ENCODE measurements at regions of chr1 and their contacts with region 1.

Region 1: DNA sequence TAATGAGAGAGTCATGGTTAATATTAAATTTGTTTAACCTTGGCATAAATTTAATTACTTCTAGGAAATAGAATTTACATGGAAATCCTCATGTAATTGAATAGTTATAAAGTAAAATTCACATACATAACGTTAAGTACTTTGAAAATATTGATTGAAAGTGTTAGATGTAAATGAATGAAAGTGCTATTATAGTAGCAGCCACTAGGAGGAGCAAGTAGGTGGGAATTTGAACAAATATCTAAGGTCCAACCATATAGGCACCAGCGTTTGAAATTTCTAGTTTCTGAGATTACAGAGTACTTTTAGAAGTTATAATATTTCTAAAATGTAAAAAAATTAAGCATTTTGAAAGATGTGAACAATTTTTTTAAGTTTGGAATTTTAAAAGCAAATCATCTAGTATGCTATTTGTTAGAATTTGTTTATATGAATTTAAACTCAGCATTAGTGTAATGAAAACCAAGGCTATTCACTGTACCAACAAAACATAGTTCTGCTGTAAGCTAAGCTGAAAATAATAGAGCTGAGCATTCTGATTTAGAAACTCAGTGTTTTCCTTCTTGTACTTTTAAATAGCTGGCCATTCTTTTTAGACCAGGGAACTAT is 3.3 kb downstream of the B3GALT2 start:
- DNase-seq: peak; percentile 71
- ATAC-seq: peak; percentile 74
- H3K4me3 ChIP-seq: peak overlapping the region; percentile 32; the same call in 1 of the 2 replicates
- H3K27ac ChIP-seq: peak overlapping the region; percentile 52; the same call in 1 of the 2 replicates
- H3K4me1 ChIP-seq: peaks cover 6% of the 10 kb centered on the region; the same call in 1 of the 2 replicates
- H3K27me3 ChIP-seq: no peaks in the 10 kb centered on the region
- CTCF ChIP-seq: peak; percentile 77
- POLR2A ChIP-seq: no peak
- RAD21 ChIP-seq: peak; percentile 79

Region 2: GRCh38 chr1:193270996-193271395 is 87.9 kb after region 1 on chr1:
- CTCF ChIA-PET with region 1: no interaction called
- POLR2A ChIA-PET with region 1: no interaction called
- dilution Hi-C with region 1: no loop called
- in situ Hi-C with region 1: no loop called
- intact Hi-C with region 1: no loop called
- DNase-seq: peak; percentile 92
- ATAC-seq: peak; percentile 87
- H3K4me3 ChIP-seq: no peak overlapping the region
- H3K27ac ChIP-seq: no peak overlapping the region
- H3K4me1 ChIP-seq: no peaks in the 10 kb centered on the region; the same call in 1 of the 2 replicates
- H3K27me3 ChIP-seq: no peaks in the 10 kb centered on the region
- CTCF ChIP-seq: no peak
- POLR2A ChIP-seq: no peak
- RAD21 ChIP-seq: no peak

Region 3: GRCh38 chr1:193299038-193299437 is 115.9 kb after region 1 on chr1:
- CTCF ChIA-PET with region 1: no interaction called
- POLR2A ChIA-PET with region 1: no interaction called
- dilution Hi-C with region 1: no loop called
- in situ Hi-C with region 1: no loop called
- intact Hi-C with region 1: no loop called
- DNase-seq: no peak
- ATAC-seq: no peak
- H3K4me3 ChIP-seq: no peak overlapping the region
- H3K27ac ChIP-seq: no peak overlapping the region
- H3K4me1 ChIP-seq: no peaks in the 10 kb centered on the region
- H3K27me3 ChIP-seq: no peaks in the 10 kb centered on the region
- CTCF ChIP-seq: no peak
- POLR2A ChIP-seq: no peak
- RAD21 ChIP-seq: no peak

Region 4: DNA sequence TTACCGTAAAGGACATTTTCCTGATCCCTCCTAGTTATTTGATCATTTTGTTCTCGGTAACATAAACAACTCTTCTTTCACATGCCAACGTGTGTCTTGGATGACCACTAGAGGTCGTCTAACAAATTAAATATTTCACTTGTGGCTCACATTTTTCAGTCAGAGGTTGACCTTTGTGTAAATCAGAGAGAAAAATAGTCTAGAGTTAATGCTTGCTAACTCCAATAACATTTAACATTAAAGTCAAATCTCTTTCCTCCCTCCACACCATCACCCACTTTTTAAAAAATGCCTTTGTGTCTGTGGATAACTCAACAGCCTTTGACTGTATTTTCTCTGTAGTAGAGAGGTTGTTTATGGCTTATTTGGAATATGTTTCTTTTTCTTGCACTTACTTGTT is 223.8 kb after region 1 on chr1:
- CTCF ChIA-PET with region 1: no interaction called
- POLR2A ChIA-PET with region 1: no interaction called
- dilution Hi-C with region 1: no loop called
- in situ Hi-C with region 1: no loop called
- intact Hi-C with region 1: loop called (anchors 2 kb)
- DNase-seq: peak; percentile 72
- ATAC-seq: peak; percentile 66
- H3K4me3 ChIP-seq: no peak overlapping the region
- H3K27ac ChIP-seq: no peak overlapping the region
- H3K4me1 ChIP-seq: no peaks in the 10 kb centered on the region; the same call in 1 of the 2 replicates
- H3K27me3 ChIP-seq: no peaks in the 10 kb centered on the region
- CTCF ChIP-seq: peak; percentile 71
- POLR2A ChIP-seq: no peak
- RAD21 ChIP-seq: peak; percentile 56

Region 5: DNA sequence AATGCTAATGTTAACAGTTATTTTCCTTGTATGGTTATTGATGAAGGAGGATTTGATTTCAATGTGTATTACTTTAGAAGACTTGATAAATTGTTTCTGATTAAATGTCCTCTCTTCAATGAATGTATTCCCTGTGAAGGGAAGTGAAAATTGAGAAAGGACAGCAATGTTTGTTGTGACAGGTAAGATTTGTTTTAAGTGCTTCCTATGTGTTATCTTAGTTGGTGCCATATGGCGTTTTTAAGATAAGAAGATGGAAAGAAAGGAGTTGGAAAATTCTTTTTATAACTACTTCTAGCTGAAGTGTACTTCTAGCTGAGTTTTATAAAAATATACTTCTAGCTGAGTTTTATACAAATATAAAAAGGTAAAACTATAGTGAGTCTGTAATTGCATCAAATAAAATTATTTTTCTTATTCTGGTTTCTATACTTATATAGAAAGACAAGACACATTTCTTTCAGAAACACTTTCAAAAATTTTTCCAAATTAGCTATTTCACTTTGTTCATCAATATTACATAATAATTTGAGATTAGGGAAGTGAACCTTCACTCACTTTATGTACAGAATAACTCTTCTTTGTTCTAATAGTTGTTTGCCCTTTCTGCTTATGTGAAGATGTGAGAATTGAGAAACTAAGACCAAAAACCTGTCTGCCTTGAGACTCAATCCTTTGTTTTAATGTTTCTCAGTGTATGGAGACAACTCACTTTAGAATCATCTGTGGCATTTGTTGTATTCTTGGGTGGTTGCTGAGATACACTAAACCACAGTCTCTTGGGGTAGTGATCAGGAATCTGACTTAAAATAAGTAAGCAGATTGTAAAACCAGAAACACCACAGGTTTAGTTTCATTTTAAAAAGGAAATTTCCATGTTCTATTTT is 386.2 kb after region 1 on chr1:
- CTCF ChIA-PET with region 1: no interaction called
- POLR2A ChIA-PET with region 1: no interaction called
- dilution Hi-C with region 1: no loop called
- in situ Hi-C with region 1: loop called (anchors 25 kb)
- intact Hi-C with region 1: loop called (anchors 10 kb)
- DNase-seq: peak; percentile 91
- ATAC-seq: peak; percentile 98
- H3K4me3 ChIP-seq: no peak overlapping the region
- H3K27ac ChIP-seq: no peak overlapping the region
- H3K4me1 ChIP-seq: no peaks in the 10 kb centered on the region; the same call in 1 of the 2 replicates
- H3K27me3 ChIP-seq: no peaks in the 10 kb centered on the region
- CTCF ChIP-seq: no peak
- POLR2A ChIP-seq: no peak
- RAD21 ChIP-seq: no peak

Region 6: DNA sequence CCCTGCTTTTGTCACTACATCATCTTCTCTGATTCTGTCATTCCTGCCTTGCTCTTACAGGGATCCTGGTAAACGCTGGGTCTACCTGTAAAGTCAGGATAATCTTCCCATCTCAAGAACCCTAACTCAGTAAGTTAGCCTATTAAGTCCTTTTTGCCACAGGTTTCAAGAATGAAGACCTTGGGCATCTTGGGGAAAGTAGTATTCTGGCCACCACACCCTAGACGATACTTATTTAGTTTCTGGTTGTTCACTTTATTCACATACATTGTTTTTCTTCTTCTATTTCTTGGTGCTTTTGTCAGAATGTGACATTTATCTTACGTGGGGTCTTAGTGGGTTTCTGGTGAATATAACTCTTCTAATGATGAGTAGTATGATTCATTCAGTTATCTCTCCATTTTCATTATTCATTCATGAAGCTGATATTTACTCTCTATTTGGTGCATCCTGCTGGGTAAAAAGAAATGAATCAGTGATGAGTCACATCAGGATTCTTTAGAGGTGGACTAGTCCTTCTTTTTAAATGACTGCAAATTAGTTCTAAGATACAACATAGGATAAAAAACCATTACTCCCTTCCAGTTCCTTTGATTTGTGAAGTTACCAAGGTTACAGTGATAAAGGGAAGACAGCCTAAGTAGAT is 517.7 kb after region 1 on chr1:
- CTCF ChIA-PET with region 1: no interaction called
- POLR2A ChIA-PET with region 1: no interaction called
- dilution Hi-C with region 1: no loop called
- in situ Hi-C with region 1: no loop called
- intact Hi-C with region 1: no loop called
- DNase-seq: peak; percentile 79
- ATAC-seq: peak; percentile 79
- H3K4me3 ChIP-seq: no peak overlapping the region
- H3K27ac ChIP-seq: peak overlapping the region; percentile 44; the same call in 1 of the 2 replicates
- H3K4me1 ChIP-seq: peaks cover 2% of the 10 kb centered on the region
- H3K27me3 ChIP-seq: no peaks in the 10 kb centered on the region
- CTCF ChIP-seq: no peak
- POLR2A ChIP-seq: no peak
- RAD21 ChIP-seq: no peak

Region 7: DNA sequence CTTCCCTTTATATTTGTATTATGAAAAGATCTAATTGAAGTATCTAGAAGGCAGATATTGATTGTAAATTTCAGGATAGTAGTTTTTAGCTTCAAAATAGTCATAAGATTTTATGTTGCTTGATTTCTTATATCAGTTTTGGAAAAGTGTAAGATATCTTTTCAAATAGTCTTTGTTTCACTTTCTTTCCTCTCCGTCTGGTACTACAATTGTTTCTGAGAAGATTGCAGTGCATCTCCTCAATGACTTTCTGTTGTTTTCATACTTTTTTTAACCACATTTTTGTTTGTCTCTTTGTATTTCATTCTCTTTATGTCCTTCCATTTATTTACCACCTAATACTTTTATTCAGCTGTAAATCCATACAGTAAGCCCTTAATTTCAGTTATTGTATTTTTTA is 967.9 kb after region 1 on chr1:
- CTCF ChIA-PET with region 1: no interaction called
- POLR2A ChIA-PET with region 1: no interaction called
- dilution Hi-C with region 1: no loop called
- in situ Hi-C with region 1: no loop called
- intact Hi-C with region 1: loop called (anchors 10 kb)
- DNase-seq: no peak
- ATAC-seq: no peak
- H3K4me3 ChIP-seq: no peak overlapping the region
- H3K27ac ChIP-seq: no peak overlapping the region
- H3K4me1 ChIP-seq: no peaks in the 10 kb centered on the region
- H3K27me3 ChIP-seq: no peaks in the 10 kb centered on the region
- CTCF ChIP-seq: no peak
- POLR2A ChIP-seq: no peak
- RAD21 ChIP-seq: no peak